PC-9 (cell line): ENCODE measurements at regions of chr12 and their contacts with region 1.

Region 1: GRCh38 chr12:19288603-19289244 is 150.6 kb upstream of the AEBP2 start:
- DNase-seq: peak in 1 of 2 experiments; percentile 40
- H3K4me3 ChIP-seq: no peak overlapping the region
- H3K27ac ChIP-seq: no peak overlapping the region
- H3K4me1 ChIP-seq: no peaks in the 10 kb centered on the region
- H3K27me3 ChIP-seq: no peaks in the 10 kb centered on the region
- CTCF ChIP-seq: peak; percentile 73

Region 2: GRCh38 chr12:18576104-18576626 is 712.6 kb before region 1 on chr12:
- CTCF ChIA-PET with region 1: no interaction called
- POLR2A ChIA-PET with region 1: no interaction called
- intact Hi-C with region 1: no loop called
- DNase-seq: no peak
- H3K4me3 ChIP-seq: no peak overlapping the region
- H3K27ac ChIP-seq: no peak overlapping the region
- H3K4me1 ChIP-seq: no peaks in the 10 kb centered on the region
- H3K27me3 ChIP-seq: no peaks in the 10 kb centered on the region
- CTCF ChIP-seq: no peak

Region 3: DNA sequence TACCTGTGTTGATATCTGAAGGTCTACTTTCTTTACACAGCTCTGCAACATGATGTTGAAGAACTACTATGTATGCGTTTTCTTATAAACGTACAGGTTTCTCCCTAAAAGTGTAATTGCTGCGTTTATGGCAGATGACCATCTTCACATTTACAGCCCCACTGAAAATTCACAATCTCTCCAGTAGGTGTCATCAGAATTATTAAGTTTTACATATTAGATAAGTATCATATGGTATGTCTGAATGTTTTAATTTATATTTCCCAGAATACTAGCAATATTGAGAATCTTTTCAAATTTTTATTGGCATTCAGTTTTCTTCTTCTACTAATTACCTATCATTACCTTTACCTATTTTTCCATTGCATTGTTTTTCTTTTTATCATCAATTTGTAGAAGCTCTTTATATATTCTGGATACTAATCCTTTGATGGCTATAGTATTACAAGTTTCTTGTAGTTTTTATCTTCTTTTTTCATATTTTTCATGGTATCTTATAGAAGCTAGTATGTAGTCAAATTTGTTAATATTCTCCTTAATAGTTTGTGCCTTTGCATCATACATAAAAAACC is 427.4 kb before region 1 on chr12:
- CTCF ChIA-PET with region 1: no interaction called
- POLR2A ChIA-PET with region 1: no interaction called
- intact Hi-C with region 1: loop called (anchors 5 kb)
- DNase-seq: no peak
- H3K4me3 ChIP-seq: no peak overlapping the region
- H3K27ac ChIP-seq: no peak overlapping the region
- H3K4me1 ChIP-seq: no peaks in the 10 kb centered on the region
- H3K27me3 ChIP-seq: no peaks in the 10 kb centered on the region
- CTCF ChIP-seq: peak; percentile 82

Region 4: DNA sequence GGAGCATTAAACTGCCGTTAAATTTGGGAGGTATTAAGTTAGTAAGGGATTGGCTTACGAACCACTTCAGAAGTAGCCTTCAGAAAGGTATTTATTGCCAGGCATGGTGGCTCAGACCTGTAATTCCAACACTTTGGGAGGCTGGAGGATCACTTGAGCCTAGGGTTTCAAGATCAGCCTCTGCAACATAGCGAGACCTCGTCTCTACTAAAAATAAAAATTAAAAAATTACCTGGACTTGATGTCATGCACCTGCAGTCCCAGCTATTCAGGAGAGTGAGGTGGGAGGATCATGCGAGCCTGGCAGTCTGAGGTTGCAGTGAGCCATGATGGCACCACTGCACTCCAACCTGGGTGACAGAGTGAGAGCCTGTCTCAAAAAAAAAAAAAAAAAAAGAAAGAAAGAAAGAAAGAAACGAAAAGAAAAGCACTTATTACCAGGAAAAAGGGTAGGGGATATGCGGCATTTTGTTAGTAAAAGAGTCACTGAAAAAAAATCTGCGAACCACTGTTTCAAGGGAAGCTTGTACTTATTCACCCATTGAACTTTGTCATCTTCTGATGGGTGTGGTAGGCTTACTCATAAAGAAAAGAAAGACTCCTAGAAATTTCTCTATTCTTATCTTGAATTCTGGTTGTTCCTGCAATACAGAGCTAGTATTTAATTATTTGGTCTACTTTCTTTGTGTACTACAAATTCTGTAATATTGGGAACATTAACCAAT is 192.8 kb before region 1 on chr12:
- CTCF ChIA-PET with region 1: no interaction called
- POLR2A ChIA-PET with region 1: interaction called, 26 read pairs
- intact Hi-C with region 1: no loop called
- DNase-seq: peak in 1 of 2 experiments; percentile 11
- H3K4me3 ChIP-seq: no peak overlapping the region
- H3K27ac ChIP-seq: no peak overlapping the region
- H3K4me1 ChIP-seq: peaks cover 13% of the 10 kb centered on the region
- H3K27me3 ChIP-seq: no peaks in the 10 kb centered on the region
- CTCF ChIP-seq: no peak

Region 5: GRCh38 chr12:19186722-19187661 is 101.7 kb before region 1 on chr12:
- CTCF ChIA-PET with region 1: no interaction called
- POLR2A ChIA-PET with region 1: interaction called, 7 read pairs
- intact Hi-C with region 1: loop called (anchors 5 kb)
- DNase-seq: peak in 1 of 2 experiments; percentile 42
- H3K4me3 ChIP-seq: no peak overlapping the region
- H3K27ac ChIP-seq: no peak overlapping the region
- H3K4me1 ChIP-seq: no peaks in the 10 kb centered on the region
- H3K27me3 ChIP-seq: no peaks in the 10 kb centered on the region
- CTCF ChIP-seq: peak; percentile 83

Region 6: GRCh38 chr12:19421503-19422282 is 133.0 kb after region 1 on chr12:
- CTCF ChIA-PET with region 1: interaction called, 13 read pairs
- POLR2A ChIA-PET with region 1: no interaction called
- intact Hi-C with region 1: no loop called
- DNase-seq: no peak
- H3K4me3 ChIP-seq: no peak overlapping the region
- H3K27ac ChIP-seq: no peak overlapping the region
- H3K4me1 ChIP-seq: no peaks in the 10 kb centered on the region
- H3K27me3 ChIP-seq: no peaks in the 10 kb centered on the region
- CTCF ChIP-seq: no peak